ENCODE measurements at regions of chr2 and their contacts with region 1.

Region 1: GRCh38 chr2:10688921-10689807 is 611 bp downstream of the NOL10 start:
- DNase-seq: no peak
- ATAC-seq: peak; percentile 26
- H3K4me3 Mint-ChIP-seq: no peak overlapping the region
- H3K27ac Mint-ChIP-seq: no peak overlapping the region
- H3K4me1 Mint-ChIP-seq: peaks cover 10% of the 10 kb centered on the region
- H3K27me3 Mint-ChIP-seq: no peaks in the 10 kb centered on the region
- CTCF ChIP-seq: no peak

Region 2: GRCh38 chr2:10634495-10634894 is 54.7 kb before region 1 on chr2:
- CTCF ChIA-PET with region 1: no interaction called
- POLR2A ChIA-PET with region 1: interaction called, 13 read pairs
- intact Hi-C with region 1: no loop called
- DNase-seq: no peak
- ATAC-seq: no peak
- H3K4me3 Mint-ChIP-seq: no peak overlapping the region
- H3K27ac Mint-ChIP-seq: no peak overlapping the region
- H3K4me1 Mint-ChIP-seq: no peaks in the 10 kb centered on the region
- H3K27me3 Mint-ChIP-seq: no peaks in the 10 kb centered on the region
- CTCF ChIP-seq: no peak